Cardiac septum (tissue), 1 donor: ENCODE measurements at regions of chr4 and their contacts with region 1.

Region 1: DNA sequence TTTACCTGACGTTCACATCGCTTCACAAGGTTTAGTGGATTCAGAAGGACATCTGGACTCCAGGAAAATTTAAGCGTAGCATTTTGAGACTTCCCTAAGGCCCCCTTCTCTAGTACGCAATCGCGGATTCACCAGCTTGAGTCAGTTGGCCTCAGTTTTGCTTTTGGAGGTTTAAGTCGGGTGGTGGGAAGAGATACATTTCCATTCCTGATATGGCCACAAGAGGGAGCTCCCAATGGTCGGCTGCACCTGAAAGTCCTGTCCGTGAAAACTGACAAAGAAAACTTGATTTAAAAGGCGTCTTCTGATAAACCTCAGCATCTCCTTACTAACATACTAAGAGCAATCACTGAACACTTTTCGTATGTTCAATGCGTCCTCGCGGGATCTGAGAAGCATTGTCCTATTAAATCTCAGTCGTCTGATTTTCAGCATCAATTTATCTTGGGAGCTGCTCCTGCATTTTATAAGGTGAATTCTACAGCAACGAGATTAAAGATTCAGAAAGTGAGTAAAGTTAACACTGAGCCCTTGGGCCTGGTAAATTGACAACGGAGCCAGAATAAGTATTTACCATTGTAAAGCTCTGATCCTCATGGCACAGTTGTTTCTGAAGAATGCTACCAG is 50.6 kb downstream of the LGI2 start:
- DNase-seq: no peak

Region 2: DNA sequence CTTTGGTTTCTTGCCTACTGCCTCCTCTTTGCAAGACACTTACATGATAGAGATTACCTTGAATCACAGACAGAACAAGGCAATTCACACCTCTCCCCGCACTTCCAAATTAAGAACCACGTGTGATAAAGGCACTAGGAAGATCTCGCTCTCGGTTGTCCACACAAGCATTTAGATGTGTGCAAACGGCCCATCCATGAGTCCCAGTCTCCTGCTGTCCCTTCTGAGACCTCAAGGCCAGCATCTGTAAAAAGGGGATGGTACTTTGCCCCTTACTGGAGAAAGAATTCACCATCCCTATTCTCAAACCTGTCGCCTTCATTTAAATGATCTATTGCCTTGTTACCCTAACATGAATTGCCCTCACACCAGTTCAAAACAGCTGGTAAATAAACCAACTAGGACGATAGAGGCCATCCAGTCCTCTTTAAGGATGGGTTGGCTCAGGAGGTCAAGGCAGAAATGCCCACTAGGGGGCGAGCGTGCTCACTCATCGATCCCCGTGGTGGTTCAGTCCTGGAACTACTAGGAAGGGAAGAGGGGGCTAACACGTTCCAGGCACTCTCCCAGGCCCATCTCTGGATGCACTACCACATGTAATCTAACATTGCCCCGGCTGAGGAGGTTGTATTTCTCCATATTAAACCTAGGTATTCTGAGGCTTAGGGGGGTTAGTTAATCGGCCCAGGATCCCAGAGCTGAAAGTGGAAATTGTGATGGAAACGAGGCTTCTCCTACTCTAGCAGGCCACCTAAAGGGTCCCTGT is 491.6 kb before region 1 on chr4:
- intact Hi-C with region 1: loop called (anchors 10 kb)
- DNase-seq: no peak

Region 3: GRCh38 chr4:24584175-24584850 is 395.9 kb before region 1 on chr4 and contains the start of gene DHX15:
- intact Hi-C with region 1: loop called (anchors 10 kb)
- DNase-seq: peak; percentile 97
- total RNA-seq, gene DHX15: 62.6 TPM

Region 4: GRCh38 chr4:24816797-24817196 is 163.4 kb before region 1 on chr4:
- intact Hi-C with region 1: no loop called
- DNase-seq: no peak

Region 5: GRCh38 chr4:24912252-24913118 is 67.7 kb before region 1 on chr4 and contains the start of gene CCDC149:
- intact Hi-C with region 1: loop called (anchors 5 kb)
- DNase-seq: peak; percentile 80
- total RNA-seq, gene CCDC149: 11.7 TPM

Region 6: DNA sequence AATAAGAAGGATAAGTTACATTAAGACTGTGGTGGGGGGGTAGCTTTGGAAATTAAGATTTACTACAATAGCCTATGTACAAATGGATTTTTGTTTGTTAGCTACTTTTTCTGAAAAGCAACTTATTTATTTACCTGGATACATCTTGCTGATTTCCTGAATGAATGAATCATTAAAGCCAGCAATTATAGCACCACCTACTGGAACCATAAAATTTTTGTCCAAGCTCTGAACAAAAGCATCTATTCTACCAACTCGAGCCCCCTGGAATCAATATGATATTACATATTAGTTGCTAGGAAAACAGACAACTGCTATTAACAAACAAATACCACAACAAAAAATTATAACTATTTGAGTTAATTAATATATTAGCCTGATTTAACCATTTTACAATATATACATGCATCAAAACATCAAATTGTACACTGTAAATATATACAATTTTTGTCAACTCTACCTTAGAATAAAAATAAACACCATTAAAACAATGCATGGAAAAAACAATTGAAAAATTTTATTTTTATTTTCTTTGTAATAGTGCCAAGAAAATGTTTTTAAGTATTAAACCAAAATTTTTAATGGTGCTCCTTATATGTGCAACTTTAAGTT is 164.8 kb after region 1 on chr4:
- intact Hi-C with region 1: loop called (anchors 2 kb)
- DNase-seq: no peak

Region 7: GRCh38 chr4:25234390-25235370 is 254.5 kb after region 1 on chr4:
- intact Hi-C with region 1: loop called (anchors 5 kb)
- DNase-seq: peak; percentile 84